MCF 10A (cell line): ENCODE measurements at regions of chr20 and their contacts with region 1.

Region 1: DNA sequence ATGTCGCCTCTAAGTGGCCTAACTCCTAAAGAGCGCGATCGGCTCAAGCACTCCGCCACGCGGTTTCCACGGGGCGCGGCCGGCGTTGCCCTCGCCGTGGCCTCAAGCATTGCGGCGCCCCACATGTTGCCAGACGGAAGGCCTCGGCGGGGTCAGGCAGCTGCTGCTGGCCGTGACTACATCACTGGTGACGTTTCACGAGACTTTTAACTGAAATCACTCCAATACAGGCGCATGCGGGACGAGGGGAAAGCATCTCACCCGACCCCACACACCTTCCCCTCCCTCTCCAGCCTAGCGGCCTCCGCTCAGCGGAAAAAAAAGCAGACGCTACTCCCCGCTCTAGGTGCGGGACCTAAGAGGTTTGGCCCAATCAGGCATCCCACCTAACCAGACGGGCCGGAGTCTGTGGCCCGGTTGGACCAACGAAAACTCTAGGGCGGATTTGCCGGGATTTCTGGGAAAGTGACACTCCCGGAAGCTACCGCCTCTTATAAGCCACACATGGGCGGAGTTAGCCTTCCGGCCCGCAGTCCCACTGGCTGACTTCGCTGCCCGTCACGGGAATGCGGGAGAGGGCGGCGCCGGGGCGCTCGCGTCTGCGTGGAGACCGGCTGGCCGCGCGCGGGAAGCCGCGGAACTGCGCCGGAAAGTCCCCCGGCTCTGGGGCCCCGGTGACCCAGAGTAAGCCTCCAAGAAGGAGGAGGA is at the start of gene NXT1:
- DNase-seq: peak; percentile 99
- H3K4me3 Mint-ChIP-seq: peak within 1 kb of the TSS; percentile 87
- H3K27ac Mint-ChIP-seq: peak within 1 kb of the TSS; percentile 97
- H3K4me1 Mint-ChIP-seq: peaks cover 17% of the 10 kb centered on the region
- H3K27me3 Mint-ChIP-seq: no peaks in the 10 kb centered on the region
- CTCF ChIP-seq: no peak
- total RNA-seq, gene NXT1: 32.2 and 40.1 TPM in 2 replicates

Region 2: GRCh38 chr20:22795871-22796270 is 554.5 kb before region 1 on chr20:
- CTCF ChIA-PET with region 1: no interaction called
- POLR2A ChIA-PET with region 1: interaction called, 21 read pairs
- intact Hi-C with region 1: no loop called
- DNase-seq: peak; percentile 93
- H3K4me3 Mint-ChIP-seq: no peak overlapping the region
- H3K27ac Mint-ChIP-seq: peak overlapping the region; percentile 5
- H3K4me1 Mint-ChIP-seq: peaks cover 48% of the 10 kb centered on the region
- H3K27me3 Mint-ChIP-seq: no peaks in the 10 kb centered on the region
- CTCF ChIP-seq: no peak

Region 3: GRCh38 chr20:23143098-23143497 is 207.3 kb before region 1 on chr20:
- CTCF ChIA-PET with region 1: interaction called, 3 read pairs
- POLR2A ChIA-PET with region 1: interaction called, 17 read pairs
- intact Hi-C with region 1: no loop called
- DNase-seq: peak; percentile 89
- H3K4me3 Mint-ChIP-seq: no peak overlapping the region
- H3K27ac Mint-ChIP-seq: peak overlapping the region; percentile 82
- H3K4me1 Mint-ChIP-seq: peaks cover 65% of the 10 kb centered on the region
- H3K27me3 Mint-ChIP-seq: no peaks in the 10 kb centered on the region
- CTCF ChIP-seq: no peak

Region 4: GRCh38 chr20:23235173-23236027 is 115.0 kb before region 1 on chr20:
- CTCF ChIA-PET with region 1: interaction called, 3 read pairs
- POLR2A ChIA-PET with region 1: interaction called, 5 read pairs
- intact Hi-C with region 1: loop called (anchors 10 kb)
- DNase-seq: peak; percentile 71
- H3K4me3 Mint-ChIP-seq: no peak overlapping the region
- H3K27ac Mint-ChIP-seq: no peak overlapping the region
- H3K4me1 Mint-ChIP-seq: peaks cover 16% of the 10 kb centered on the region
- H3K27me3 Mint-ChIP-seq: no peaks in the 10 kb centered on the region
- CTCF ChIP-seq: peak; percentile 73

Region 5: GRCh38 chr20:23420943-23421931 is 70.9 kb after region 1 on chr20 and contains the start of gene NAPB:
- CTCF ChIA-PET with region 1: interaction called, 7 read pairs
- POLR2A ChIA-PET with region 1: interaction called, 53 read pairs
- intact Hi-C with region 1: no loop called
- DNase-seq: peak; percentile 92
- H3K4me3 Mint-ChIP-seq: peak within 1 kb of the TSS; percentile 78
- H3K27ac Mint-ChIP-seq: peak within 1 kb of the TSS; percentile 90
- H3K4me1 Mint-ChIP-seq: peaks cover 9% of the 10 kb centered on the region
- H3K27me3 Mint-ChIP-seq: no peaks in the 10 kb centered on the region
- CTCF ChIP-seq: peak; percentile 39
- total RNA-seq, gene NAPB: 9.6 and 10.9 TPM in 2 replicates

Region 6: DNA sequence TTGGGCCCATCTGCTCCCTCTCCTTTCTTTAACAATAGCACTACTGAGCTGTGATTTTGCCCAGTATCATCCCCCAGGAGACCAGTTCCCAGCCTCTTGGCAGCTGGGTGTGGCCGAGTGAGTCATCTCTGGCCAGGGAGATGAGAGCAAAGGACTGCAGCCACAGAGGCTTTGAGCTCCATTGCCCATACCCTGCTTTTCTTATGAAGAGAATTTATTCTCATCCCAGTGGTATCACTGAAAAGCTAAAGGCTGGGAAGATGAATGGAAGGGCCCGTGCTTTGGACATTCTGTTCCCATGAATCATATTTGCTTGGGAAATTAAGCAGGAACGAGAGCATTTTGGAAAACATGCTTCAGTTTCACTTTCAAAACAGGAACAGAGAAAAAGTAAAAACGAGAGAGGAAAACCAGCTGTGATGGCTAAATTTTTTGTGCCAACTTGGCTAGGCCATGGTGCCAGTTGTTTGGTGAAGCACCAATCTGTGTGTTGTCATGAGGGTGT is 272.5 kb after region 1 on chr20:
- CTCF ChIA-PET with region 1: no interaction called
- POLR2A ChIA-PET with region 1: interaction called, 12 read pairs
- intact Hi-C with region 1: loop called (anchors 5 kb)
- DNase-seq: peak; percentile 94
- H3K4me3 Mint-ChIP-seq: peak overlapping the region; percentile 61
- H3K27ac Mint-ChIP-seq: peak overlapping the region; percentile 92
- H3K4me1 Mint-ChIP-seq: peaks cover 43% of the 10 kb centered on the region
- H3K27me3 Mint-ChIP-seq: no peaks in the 10 kb centered on the region
- CTCF ChIP-seq: no peak